ENCODE measurements at regions of chrX and their contacts with region 1.

Region 1: GRCh38 chrX:85111347-85111746 is 107.7 kb downstream of the APOOL start:
- ATAC-seq: no peak
- H3K4me3 ChIP-seq: no peak overlapping the region
- H3K27ac ChIP-seq: no peak overlapping the region
- H3K4me1 ChIP-seq: no peaks in the 10 kb centered on the region

Region 2: GRCh38 chrX:85221361-85221760 is 110.0 kb after region 1 on chrX:
- in situ Hi-C with region 1: no loop called
- ATAC-seq: no peak
- H3K4me3 ChIP-seq: no peak overlapping the region
- H3K27ac ChIP-seq: no peak overlapping the region
- H3K4me1 ChIP-seq: no peaks in the 10 kb centered on the region

Region 3: DNA sequence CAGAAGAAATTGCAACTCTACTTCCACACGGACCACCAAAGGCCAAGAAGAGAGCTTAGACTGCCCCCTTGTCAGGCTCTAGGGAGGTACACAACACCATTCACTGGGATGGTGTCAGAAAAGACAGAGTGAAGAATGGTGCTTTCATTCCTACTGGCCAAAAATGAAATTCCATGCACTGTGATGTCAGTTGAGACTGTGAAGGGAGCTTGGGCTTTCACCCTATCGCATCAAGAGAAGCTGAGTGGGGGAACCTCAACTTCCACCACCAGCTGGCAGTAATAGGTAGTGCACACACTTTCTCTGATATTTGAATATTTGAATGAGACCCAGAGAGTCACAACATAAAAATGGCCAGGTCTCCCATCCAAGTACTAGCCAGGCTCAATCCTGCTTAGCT is 198.4 kb after region 1 on chrX:
- in situ Hi-C with region 1: no loop called
- ATAC-seq: no peak
- H3K4me3 ChIP-seq: no peak overlapping the region
- H3K27ac ChIP-seq: no peak overlapping the region
- H3K4me1 ChIP-seq: no peaks in the 10 kb centered on the region

Region 4: DNA sequence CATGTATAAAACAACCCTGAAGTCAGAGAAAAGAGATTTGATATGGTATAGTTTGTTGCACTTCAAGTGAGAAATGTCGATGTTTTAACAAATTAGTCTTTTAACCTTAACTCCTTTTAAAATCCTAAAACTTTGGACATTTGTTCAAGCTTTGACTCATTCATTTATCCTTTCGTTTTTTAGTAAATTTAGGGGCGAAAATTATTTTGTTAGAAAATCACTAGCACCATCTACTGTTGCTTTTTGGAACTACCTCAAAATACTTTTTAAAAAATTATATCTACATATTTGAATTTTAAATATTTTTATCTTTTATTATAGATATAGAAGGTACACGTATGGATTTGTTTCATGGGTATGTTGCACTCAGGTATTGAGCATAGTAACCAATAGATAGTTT is 433.3 kb after region 1 on chrX:
- in situ Hi-C with region 1: loop called in 1 of 9 experiments (anchors 25 kb)
- ATAC-seq: no peak
- H3K4me3 ChIP-seq: no peak overlapping the region
- H3K27ac ChIP-seq: no peak overlapping the region
- H3K4me1 ChIP-seq: no peaks in the 10 kb centered on the region

Measured in motor neuron (in vitro differentiated cells).